ENCODE measurements at regions of chr12 and their contacts with region 1.

Region 1: GRCh38 chr12:49623142-49623904 is at the start of gene PRPF40B:
- DNase-seq: peak in 1 of 2 donors; percentile 85
- H3K4me3 ChIP-seq: peak within 1 kb of the TSS; percentile 59 to 65
- H3K27ac ChIP-seq: peak within 1 kb of the TSS; percentile 92
- H3K4me1 ChIP-seq: peaks cover 26% of the 10 kb centered on the region
- H3K27me3 ChIP-seq: no peaks in the 10 kb centered on the region
- CTCF ChIP-seq: no peak
- POLR2A ChIP-seq: peak in 1 of 2 donors; percentile 71
- total RNA-seq, gene PRPF40B: 22.1 TPM

Region 2: DNA sequence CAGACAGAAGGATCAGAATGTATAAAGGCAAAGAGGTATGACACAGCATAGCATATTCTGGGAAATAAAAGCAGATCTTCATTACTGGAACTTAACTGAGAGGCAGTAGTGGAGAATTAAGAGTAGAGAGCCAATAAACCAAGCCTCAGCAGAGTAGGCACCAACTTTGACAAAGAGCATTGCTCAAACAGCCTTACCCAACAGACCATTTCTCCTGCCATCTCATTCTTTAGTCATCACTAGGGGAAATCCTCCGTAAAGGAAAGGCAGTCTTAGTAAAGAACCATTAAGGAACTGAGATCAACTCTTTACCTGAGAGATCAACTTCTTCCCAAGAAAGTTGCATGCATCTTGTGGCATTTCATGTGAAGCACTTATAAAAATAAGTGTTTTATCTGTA is 1554.1 kb before region 1 on chr12:
- intact Hi-C with region 1: no loop called
- DNase-seq: no peak
- H3K4me3 ChIP-seq: no peak overlapping the region
- H3K27ac ChIP-seq: no peak overlapping the region
- H3K4me1 ChIP-seq: no peaks in the 10 kb centered on the region
- H3K27me3 ChIP-seq: no peaks in the 10 kb centered on the region
- CTCF ChIP-seq: no peak
- POLR2A ChIP-seq: no peak

Region 3: DNA sequence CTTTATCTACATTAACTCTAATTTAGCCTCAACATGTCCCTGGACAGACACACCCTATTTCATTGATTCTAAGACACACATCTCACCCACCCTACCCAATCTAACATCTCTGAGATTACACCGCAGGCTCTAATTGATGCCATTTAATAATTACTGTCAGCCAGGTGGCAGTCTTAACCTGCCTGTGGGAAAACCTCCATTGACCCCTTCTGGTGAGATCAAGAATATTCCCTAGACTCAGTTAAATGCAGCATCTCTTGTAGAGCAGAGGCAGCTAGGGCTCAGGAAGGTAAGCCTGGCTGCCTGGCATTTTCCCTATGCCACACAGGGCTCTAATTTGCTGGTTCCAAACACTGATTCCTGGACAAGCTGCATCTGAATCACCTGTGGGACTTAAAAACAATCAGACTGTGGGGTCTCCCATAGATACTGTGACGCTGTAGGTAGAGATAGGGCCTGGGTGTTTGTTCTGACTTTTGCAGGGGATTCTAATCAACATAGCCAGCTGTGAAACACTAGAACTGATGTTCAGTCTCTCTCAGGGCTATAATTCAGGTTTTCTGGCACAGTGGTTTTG is 69.7 kb before region 1 on chr12:
- intact Hi-C with region 1: loop called (anchors 5 kb)
- DNase-seq: no peak
- H3K4me3 ChIP-seq: no peak overlapping the region
- H3K27ac ChIP-seq: no peak overlapping the region
- H3K4me1 ChIP-seq: peaks cover 11% of the 10 kb centered on the region
- H3K27me3 ChIP-seq: no peaks in the 10 kb centered on the region
- CTCF ChIP-seq: no peak
- POLR2A ChIP-seq: no peak

Region 4: DNA sequence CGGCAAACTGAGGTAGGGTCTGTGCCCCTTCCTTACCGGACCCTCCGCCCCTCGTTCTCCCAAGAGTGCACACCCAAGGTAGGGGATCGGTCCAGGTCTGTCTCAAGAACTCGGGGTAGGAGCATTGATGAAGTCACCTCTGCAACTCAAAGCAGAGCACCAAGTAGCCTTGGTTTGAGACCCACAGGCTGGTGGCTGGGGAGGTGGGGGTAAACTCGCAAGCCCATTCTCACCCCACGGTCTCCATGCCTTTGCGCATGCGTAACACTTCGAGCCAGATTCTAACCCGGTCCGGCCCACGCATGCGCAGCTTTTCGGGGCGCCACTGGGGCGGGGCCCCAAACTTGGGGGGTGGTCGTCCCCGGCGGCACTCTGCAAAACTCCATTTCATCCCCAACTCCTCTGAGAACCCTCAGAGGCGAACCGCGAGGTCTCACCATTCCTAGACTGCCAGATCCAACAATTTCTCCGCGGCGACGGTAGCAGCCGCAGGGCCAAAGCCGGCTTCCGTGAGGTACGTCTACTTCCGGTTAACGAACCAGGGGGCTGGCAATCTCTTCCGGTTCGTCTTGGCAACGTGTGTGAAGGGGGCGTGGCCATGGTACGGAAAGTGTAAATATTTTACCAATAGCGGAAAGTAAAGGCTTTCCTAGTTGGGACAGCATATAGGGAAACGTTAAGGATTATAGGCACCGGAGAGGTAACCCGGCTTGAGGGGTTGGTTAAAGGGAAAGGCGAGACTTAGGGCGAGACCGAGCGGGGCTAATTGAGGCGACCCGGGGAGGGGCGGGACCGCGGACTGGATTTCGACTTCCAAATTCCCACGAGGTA is 55.5 kb before region 1 on chr12 and contains the start of gene MCRS1:
- intact Hi-C with region 1: loop called (anchors 5 kb)
- DNase-seq: no peak
- H3K4me3 ChIP-seq: peak within 1 kb of the TSS; percentile 72 to 91
- H3K27ac ChIP-seq: peak within 1 kb of the TSS; percentile 90
- H3K4me1 ChIP-seq: peaks cover 40% of the 10 kb centered on the region
- H3K27me3 ChIP-seq: no peaks in the 10 kb centered on the region
- CTCF ChIP-seq: peak in 1 of 3 experiments; percentile 37
- POLR2A ChIP-seq: peak in 1 of 2 donors; percentile 39
- total RNA-seq, gene MCRS1: 40.8 TPM

Measured in vagina (tissue), 2 donors.